PC-9 (cell line): ENCODE measurements at regions of chr17 and their contacts with region 1.

Region 1: GRCh38 chr17:41548844-41549595 is 20.9 kb upstream of the KRT19 start:
- DNase-seq: peak; percentile 85 to 92
- H3K4me3 ChIP-seq: peak overlapping the region; percentile 53; the same call in 1 of the 2 replicates
- H3K27ac ChIP-seq: peak overlapping the region; percentile 93
- H3K4me1 ChIP-seq: peaks cover 69% of the 10 kb centered on the region
- H3K27me3 ChIP-seq: no peaks in the 10 kb centered on the region
- CTCF ChIP-seq: peak; percentile 94

Region 2: DNA sequence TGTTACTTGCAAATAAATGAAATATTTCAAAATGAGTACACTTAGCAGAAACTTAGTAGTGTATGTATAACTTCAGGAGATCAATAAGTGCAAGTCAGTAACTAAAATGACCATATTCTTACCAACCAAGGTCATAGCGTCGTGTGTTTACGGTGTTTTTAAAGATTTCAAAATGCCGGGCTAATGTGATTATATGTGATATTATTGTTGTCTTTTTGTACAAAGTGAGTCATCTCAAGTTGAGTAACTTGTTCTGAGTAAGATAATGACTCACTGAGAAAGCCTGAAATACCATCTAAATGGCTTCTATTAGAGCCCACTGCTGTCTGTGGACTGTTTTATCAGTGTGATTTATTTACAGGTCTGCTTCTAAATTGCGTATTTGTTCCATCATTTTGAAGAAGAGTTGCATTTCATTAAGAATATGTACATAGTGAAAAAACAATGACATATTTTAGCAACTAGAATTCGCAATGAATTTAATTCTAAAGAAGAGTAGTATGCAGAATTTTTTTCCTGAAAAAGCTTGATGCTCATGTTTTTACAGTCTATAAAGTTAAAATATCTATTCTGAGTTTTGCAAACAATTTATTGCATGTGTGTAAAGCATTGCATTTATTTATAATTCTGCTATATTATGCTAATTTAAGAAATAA is 694.7 kb before region 1 on chr17:
- CTCF ChIA-PET with region 1: interaction called, 3 read pairs
- POLR2A ChIA-PET with region 1: no interaction called
- intact Hi-C with region 1: loop called (anchors 1 kb)
- DNase-seq: peak in 1 of 2 experiments; percentile 90
- H3K4me3 ChIP-seq: no peak overlapping the region
- H3K27ac ChIP-seq: peak overlapping the region; percentile 94
- H3K4me1 ChIP-seq: peaks cover 72% of the 10 kb centered on the region
- H3K27me3 ChIP-seq: no peaks in the 10 kb centered on the region
- CTCF ChIP-seq: no peak

Region 3: GRCh38 chr17:41322094-41322902 is 226.7 kb before region 1 on chr17:
- CTCF ChIA-PET with region 1: no interaction called
- POLR2A ChIA-PET with region 1: no interaction called
- intact Hi-C with region 1: loop called (anchors 2 kb)
- DNase-seq: peak in 1 of 2 experiments; percentile 22
- H3K4me3 ChIP-seq: no peak overlapping the region
- H3K27ac ChIP-seq: no peak overlapping the region
- H3K4me1 ChIP-seq: no peaks in the 10 kb centered on the region
- H3K27me3 ChIP-seq: no peaks in the 10 kb centered on the region
- CTCF ChIP-seq: peak; percentile 80

Region 4: DNA sequence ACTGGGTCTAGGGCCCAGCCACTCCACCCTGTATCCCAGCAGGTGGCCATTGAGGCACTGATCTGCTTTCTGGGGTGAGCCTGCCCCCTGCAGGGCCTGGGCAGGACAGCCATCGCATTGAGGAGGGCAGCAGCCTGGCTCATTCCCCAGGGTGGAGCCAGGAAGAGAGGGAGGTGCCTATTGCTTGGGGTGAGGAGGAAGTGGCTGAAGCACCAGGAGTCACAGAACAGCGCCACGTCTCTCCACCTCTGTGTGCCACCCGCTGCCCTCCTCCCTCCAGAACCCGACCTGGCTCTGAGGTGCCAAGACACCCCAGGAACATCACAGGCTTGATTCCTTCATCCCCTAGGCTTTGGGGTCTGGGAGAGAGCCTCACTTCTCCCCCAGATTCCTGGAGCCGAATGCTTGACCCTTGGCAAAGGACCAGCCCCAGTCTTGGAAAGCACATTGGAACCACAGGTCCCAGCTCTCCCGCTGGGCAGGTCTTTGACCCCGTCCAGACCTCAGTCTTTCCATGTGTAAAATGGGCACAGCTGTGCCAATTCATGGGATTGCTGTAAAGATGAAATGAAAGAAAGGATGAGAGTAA is 52.1 kb before region 1 on chr17:
- CTCF ChIA-PET with region 1: interaction called, 6 read pairs
- POLR2A ChIA-PET with region 1: interaction called, 7 read pairs
- intact Hi-C with region 1: loop called (anchors 1 kb)
- DNase-seq: peak; percentile 82 to 87
- H3K4me3 ChIP-seq: no peak overlapping the region
- H3K27ac ChIP-seq: no peak overlapping the region; the same call in 1 of the 2 replicates
- H3K4me1 ChIP-seq: peaks cover 83% of the 10 kb centered on the region
- H3K27me3 ChIP-seq: no peaks in the 10 kb centered on the region
- CTCF ChIP-seq: peak; percentile 86

Region 5: DNA sequence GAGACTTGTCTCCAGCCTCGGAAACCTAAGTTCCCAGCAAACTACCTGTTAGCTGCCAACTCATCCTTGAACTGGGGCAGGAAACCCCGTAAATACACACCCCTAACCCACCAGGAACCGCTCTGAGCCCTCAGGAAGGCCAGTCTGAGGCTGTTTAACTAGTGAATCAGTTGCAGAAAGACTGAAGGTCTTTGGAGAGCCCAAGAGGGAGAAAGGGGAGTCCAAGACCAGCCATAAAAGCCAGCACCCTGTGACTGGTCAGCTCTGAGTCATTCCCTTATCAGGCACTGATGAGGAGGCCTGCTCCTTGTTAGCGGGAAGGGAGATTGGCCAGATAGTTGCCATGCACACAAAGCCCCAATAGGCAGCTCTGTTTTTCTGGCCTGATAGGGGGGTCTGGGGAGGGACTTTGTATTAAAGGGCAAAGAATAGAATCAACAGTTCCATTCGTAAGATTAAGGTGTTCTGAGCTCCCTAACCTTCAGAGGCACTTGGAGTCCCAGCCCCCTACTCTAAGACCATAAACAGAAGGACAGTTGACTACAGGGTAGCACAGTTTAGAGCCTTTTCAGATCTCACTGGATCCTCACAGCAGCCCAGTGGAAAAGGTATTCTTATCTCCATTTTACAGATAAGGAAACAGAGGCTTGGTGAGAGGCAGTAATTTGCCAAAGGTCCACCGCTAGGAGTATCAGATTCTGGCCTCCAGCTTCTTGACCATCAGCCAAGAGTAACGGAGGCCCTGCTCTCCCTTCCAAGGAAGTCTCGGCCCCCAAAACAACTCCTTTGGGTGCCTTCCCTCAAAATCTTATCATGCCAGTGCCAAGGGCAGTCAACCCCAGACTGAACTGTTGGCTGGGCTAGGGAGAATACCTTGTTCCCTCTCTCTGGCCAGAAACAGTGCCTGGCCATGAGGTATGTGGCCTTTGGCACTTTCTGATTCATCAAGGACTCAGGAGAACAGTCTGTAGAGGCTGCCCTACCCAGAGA is 18.7 kb before region 1 on chr17:
- CTCF ChIA-PET with region 1: interaction called, 27 read pairs
- POLR2A ChIA-PET with region 1: interaction called, 78 read pairs
- intact Hi-C with region 1: loop called (anchors 1 kb)
- DNase-seq: peak; percentile 86 to 99
- H3K4me3 ChIP-seq: peak overlapping the region; percentile 93
- H3K27ac ChIP-seq: peak overlapping the region; percentile 95
- H3K4me1 ChIP-seq: peaks cover 66% of the 10 kb centered on the region
- H3K27me3 ChIP-seq: no peaks in the 10 kb centered on the region
- CTCF ChIP-seq: no peak

Region 6: GRCh38 chr17:41665566-41666236 is 116.7 kb after region 1 on chr17:
- CTCF ChIA-PET with region 1: interaction called, 15 read pairs
- POLR2A ChIA-PET with region 1: no interaction called
- intact Hi-C with region 1: loop called (anchors 1 kb)
- DNase-seq: peak; percentile 75 to 90
- H3K4me3 ChIP-seq: peak overlapping the region; percentile 46; the same call in 1 of the 2 replicates
- H3K27ac ChIP-seq: peak overlapping the region; percentile 29; the same call in 1 of the 2 replicates
- H3K4me1 ChIP-seq: peaks cover 26% of the 10 kb centered on the region
- H3K27me3 ChIP-seq: no peaks in the 10 kb centered on the region
- CTCF ChIP-seq: peak; percentile 91